ENCODE measurements at regions of chr2 and their contacts with region 1.

Region 1: DNA sequence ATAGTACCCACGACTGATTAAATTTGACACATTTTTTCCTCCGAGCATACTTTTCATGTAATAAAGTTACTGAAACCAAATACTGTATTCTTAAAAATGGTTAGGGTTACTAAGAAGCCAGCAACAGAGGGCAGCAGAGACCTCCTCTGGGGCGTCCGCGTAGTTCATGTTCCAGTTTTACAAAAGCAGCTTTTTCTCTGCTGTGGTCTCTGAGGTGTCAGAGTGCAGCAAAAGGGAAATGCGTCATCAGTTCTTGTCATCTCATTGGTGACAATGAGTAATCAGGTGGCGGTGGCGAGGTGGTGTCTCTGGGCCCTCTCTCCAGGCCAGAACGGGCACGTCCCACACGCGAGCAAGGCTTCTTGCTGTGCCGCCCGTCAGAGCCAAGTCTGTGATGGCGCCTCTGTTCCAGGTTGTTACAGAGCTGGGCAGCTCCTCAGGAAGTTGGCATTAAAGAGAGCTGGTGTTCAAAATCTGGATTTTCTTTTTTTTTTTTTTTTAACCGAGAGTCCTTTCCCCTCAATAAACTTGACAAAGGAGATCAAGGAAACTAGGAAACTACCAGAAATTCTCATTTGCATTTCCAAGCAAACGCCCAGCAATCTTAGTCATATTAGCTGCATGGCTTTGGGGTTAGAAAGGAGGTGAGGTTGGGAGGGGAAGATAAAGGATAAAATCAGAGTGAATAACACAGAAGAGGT is 98.6 kb upstream of the BZW1 start:
- DNase-seq: peak; percentile 96
- ATAC-seq: peak; percentile 94
- H3K4me3 ChIP-seq: peak overlapping the region; percentile 35 to 65 (median 50); a peak in 5 of 6 replicates
- H3K27ac ChIP-seq: peak overlapping the region; percentile 41
- H3K4me1 ChIP-seq: peaks cover 20% of the 10 kb centered on the region
- H3K27me3 ChIP-seq: no peaks in the 10 kb centered on the region; a peak in 1 of 5 replicates
- CTCF ChIP-seq: peak; percentile 94
- EP300 ChIP-seq: peak in 1 of 2 experiments; percentile 47; a peak in 1 of 4 replicates
- POLR2A ChIP-seq: peak; percentile 74 to 92
- RAD21 ChIP-seq: peak; percentile 93

Region 2: DNA sequence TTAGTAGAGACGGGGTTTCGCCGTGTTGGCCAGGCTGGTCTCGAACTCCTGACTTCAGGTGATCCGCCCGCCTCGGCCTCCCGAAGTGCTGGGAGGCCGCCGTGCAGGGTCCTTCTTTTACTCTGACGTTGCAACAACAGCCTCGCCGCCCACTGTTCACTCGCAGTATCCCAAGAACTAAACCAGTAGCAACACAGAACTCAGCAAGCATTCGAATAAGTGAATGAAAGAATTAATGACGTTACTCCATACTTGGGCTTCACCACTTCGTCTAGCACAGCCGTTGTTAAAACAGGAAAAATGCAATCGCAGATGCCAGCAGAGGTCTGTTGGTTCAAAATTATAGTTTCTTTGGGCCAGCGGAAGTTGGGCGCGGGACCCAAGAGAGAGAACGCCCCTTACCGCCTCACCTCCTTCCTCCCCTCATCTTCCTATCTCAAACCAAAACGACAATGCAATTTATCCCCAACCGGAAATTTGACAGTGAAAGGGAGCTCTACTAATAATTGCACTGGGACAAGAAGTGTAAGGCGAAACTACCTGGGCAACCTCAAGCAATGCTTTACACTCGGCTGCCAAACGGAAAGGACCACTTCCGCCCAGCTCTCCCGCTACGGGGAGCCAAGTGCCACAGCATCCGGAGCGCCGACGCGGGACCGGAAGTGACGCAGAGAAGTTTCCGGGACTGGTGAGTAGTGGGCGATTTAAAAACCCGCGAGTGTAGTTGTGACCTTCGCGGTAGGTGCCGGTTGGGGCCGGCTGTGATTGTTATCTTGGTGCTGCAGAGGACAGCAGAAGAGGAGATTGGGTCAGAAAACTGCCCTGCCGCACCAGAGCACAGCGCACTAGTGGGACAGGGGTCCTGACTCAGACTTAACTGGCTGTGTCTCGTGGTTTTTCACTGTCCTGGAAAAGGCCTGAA is 175.8 kb after region 1 on chr2 and contains the starts of genes NIF3L1 and PPIL3:
- CTCF ChIA-PET with region 1: no interaction called
- POLR2A ChIA-PET with region 1: interaction called, 5 read pairs
- in situ Hi-C with region 1: no loop called
- intact Hi-C with region 1: loop called (anchors 2 kb)
- DNase-seq: peak; percentile 99
- ATAC-seq: peak; percentile 90
- H3K4me3 ChIP-seq: peak within 1 kb of the TSS; percentile 79 to 92 (median 90)
- H3K27ac ChIP-seq: peak within 1 kb of the TSS; percentile 97
- H3K4me1 ChIP-seq: peaks cover 34% of the 10 kb centered on the region
- H3K27me3 ChIP-seq: no peaks in the 10 kb centered on the region; a peak in 2 of 5 replicates
- CTCF ChIP-seq: no peak; the same call in none of the 2 replicates
- EP300 ChIP-seq: peak; percentile 30 to 68; a peak in 2 of 4 replicates
- POLR2A ChIP-seq: peak; percentile 69 to 95
- RAD21 ChIP-seq: 0 out of 2 replicates have a peak, but pooled peaks have one; percentile 17
- total RNA-seq, gene NIF3L1: 67.9 and 98.5 TPM in 2 replicates
- total RNA-seq, gene PPIL3: 98.7 and 126 TPM in 2 replicates

Measured in HepG2 (cell line).